Motor neuron (in vitro differentiated cells): ENCODE measurements at regions of chr2 and their contacts with region 1.

Region 1: GRCh38 chr2:219475697-219476651 is 22.7 kb upstream of the GMPPA start:
- ATAC-seq: peak; percentile 68 to 93 (median 78)
- H3K4me3 ChIP-seq: peak overlapping the region in 2 of 5 donors; percentile 8 to 24
- H3K27ac ChIP-seq: peak overlapping the region; percentile 74 to 88
- H3K4me1 ChIP-seq: peaks cover 23 to 30% of the 10 kb centered on the region in 2 donors

Region 2: DNA sequence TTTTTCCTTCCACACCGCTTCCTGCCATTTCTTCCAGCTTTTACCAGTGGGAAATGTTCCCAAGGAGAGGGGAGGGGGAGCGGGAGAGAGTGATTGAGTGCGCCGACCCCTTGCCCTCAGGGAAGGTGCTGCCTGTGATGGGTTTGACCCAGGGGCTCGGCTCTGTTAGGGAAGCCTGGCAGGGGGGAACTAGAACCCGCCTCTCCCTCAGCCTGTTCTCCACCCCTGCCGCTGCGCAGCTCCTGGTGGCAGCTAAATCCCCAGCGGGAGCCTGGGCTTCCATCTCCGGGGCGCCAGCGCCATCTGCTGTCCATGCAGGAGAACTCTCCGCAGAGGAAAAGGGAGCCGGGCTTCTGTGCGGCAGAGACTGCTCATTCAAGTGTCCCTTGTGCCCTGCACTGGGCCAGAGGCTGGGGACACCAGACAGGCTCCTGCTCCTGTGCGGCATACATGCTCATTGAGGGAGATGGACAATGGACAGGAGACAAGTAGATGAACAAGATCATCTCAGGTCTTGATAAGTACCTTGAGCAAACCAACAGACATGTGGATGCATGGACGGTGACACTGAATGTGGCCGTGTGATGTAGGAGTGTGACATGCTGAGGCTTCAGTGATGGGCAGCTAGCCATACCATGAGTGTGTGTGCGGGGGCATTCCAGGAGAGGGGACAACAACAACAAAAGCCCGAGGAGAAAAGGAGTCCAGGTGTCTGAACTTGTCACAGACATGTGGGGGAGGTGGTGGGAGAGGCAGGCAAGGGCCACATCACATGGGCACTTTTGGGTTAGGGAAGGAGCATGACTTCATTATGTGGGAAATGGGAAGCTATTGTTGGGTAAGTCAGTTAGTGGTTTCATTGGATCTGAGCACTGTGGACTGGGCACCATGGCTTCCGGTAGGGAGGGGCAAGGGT is 54.3 kb after region 1 on chr2:
- in situ Hi-C with region 1: loop called in 1 of 9 experiments (anchors 10 kb)
- ATAC-seq: peak; percentile 71 to 94 (median 83)
- H3K4me3 ChIP-seq: no peak overlapping the region
- H3K27ac ChIP-seq: no peak overlapping the region
- H3K4me1 ChIP-seq: peaks cover 32 to 34% of the 10 kb centered on the region in 2 donors